ENCODE measurements at regions of chr7 and their contacts with region 1.

Region 1: GRCh38 chr7:116316833-116317612 is 106.7 kb downstream of the TES start:
- DNase-seq: peak; percentile 99
- H3K4me3 ChIP-seq: peak overlapping the region in 2 of 3 experiments; percentile 12 to 57
- H3K27ac ChIP-seq: peak overlapping the region; percentile 97
- H3K4me1 ChIP-seq: peaks cover 63% of the 10 kb centered on the region
- H3K27me3 ChIP-seq: no peaks in the 10 kb centered on the region
- CTCF ChIP-seq: no peak
- POLR2A ChIP-seq: peak; percentile 15

Region 2: DNA sequence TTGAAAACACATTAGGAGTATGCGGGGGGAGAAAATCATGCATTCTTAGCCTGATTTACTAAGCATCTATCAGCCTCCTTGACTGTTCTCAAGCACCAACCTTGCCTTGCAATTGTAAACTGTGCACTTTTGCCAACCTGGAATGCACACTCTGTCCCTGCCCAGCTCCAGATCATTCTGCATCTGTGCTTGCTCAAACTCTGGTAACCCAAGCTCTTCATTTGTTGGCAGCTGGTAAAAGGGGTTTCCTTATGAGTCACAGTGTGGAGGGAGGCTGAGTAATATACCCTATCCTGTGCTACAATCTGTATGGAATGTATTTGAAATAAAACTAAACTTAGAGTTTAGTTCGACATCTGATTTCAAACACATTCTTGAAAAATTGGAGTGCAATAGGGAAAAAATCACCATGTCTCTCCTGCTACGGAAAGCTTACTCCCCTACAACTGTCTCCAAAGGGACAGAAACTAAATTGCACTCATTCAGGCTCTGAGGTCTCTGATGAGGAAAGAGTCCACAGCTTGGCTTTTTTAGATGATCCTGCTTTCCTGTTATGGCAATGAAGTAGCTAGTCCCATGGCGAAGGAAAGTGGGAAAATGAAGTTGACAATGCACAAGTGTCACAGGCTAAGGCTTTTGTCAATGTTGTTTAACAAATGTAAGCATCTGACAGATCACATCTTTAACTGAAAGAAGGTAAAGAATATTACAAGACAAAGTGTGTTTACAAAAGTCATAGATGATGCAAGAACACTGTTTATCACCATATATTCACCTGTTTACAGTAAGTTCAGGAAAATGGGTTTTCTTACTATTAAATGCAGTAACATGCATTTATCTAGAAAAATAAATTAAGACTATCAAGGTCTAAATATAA is 44.8 kb before region 1 on chr7:
- CTCF ChIA-PET with region 1: interaction called, 3 read pairs
- POLR2A ChIA-PET with region 1: interaction called, 4 read pairs
- dilution Hi-C with region 1: no loop called
- intact Hi-C with region 1: loop called (anchors 2 kb)
- DNase-seq: peak; percentile 94
- H3K4me3 ChIP-seq: peak overlapping the region in 1 of 3 experiments; percentile 48
- H3K27ac ChIP-seq: peak overlapping the region; percentile 90
- H3K4me1 ChIP-seq: peaks cover 57% of the 10 kb centered on the region
- H3K27me3 ChIP-seq: no peaks in the 10 kb centered on the region
- CTCF ChIP-seq: no peak
- POLR2A ChIP-seq: no peak

Region 3: DNA sequence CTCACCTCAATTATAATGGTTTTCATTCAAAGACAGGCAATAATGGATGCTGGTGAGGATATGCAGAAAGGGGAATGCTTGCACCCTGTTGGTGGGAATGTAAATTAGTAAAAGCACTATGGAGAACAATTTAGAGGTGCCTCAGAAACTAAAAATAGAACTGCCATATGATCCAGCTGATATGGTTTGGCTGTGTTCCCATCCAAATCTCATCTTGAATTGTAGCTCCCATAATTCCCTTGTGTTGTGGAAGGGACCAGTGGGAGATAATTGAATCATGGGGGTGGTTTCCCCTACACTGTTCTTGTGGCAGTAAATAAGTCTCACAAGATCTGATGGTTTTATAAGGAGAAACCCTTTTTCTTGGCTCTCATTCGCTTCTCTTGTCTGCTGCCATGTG is 19.0 kb before region 1 on chr7:
- CTCF ChIA-PET with region 1: interaction called, 5 read pairs
- POLR2A ChIA-PET with region 1: no interaction called
- dilution Hi-C with region 1: no loop called
- intact Hi-C with region 1: loop called (anchors 2 kb)
- DNase-seq: no peak
- H3K4me3 ChIP-seq: no peak overlapping the region
- H3K27ac ChIP-seq: no peak overlapping the region
- H3K4me1 ChIP-seq: peaks cover 4% of the 10 kb centered on the region
- H3K27me3 ChIP-seq: no peaks in the 10 kb centered on the region
- CTCF ChIP-seq: no peak
- POLR2A ChIP-seq: no peak

Region 4: GRCh38 chr7:116327752-116328151 is 10.7 kb after region 1 on chr7:
- CTCF ChIA-PET with region 1: interaction called, 3 read pairs
- POLR2A ChIA-PET with region 1: no interaction called
- dilution Hi-C with region 1: no loop called
- intact Hi-C with region 1: loop called (anchors 1 kb)
- DNase-seq: peak; percentile 97
- H3K4me3 ChIP-seq: peak overlapping the region; percentile 43 to 99 (median 98)
- H3K27ac ChIP-seq: peak overlapping the region; percentile 97
- H3K4me1 ChIP-seq: peaks cover 48% of the 10 kb centered on the region
- H3K27me3 ChIP-seq: no peaks in the 10 kb centered on the region
- CTCF ChIP-seq: no peak
- POLR2A ChIP-seq: peak; percentile 97

Region 5: DNA sequence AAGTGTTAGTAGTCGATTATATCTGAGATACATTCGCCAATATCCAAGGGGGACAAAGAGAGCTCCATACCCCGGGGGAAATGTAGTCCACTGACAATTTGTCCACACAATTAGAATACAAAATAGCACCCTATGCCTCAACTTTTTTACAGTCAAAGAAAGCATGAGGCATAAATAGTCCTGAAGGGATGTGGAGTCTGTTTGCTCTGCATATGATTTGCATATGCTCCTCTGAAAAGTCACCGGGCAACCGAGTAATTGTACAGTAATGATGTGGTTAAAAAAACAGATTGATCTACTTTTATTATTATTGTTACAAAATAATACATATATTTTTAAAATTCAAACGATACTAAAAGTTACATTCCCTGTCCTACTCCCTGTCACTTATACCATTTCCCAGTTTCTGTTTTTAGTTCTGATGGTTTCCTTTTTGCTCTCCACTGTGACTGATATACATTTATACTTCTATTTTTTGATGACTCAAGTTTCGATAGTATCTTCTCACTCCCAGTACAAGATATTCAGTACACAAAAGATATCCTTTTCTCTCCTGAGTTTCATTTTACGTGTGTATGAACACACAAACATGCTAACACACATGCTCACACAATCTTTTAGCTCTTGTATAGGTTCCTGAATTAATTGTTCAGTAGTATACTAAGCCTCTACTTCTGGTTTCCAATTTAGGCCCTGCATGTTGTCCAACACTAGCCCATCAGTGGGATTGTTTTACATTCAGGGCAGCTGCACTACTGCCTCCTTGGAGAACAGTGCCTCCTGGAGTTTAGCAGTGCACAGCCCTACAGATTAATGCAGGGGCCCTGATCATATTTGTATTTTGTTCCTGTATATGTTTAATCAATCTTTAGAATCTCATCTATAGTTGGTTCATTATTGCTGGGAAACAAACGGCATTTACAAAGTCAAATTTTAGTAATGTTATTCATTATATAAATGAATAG is 24.2 kb after region 1 on chr7:
- CTCF ChIA-PET with region 1: interaction called, 5 read pairs
- POLR2A ChIA-PET with region 1: no interaction called
- dilution Hi-C with region 1: no loop called
- intact Hi-C with region 1: loop called (anchors 1 kb)
- DNase-seq: peak; percentile 72
- H3K4me3 ChIP-seq: peak overlapping the region in 1 of 3 experiments; percentile 31
- H3K27ac ChIP-seq: peak overlapping the region; percentile 87
- H3K4me1 ChIP-seq: peaks cover 49% of the 10 kb centered on the region
- H3K27me3 ChIP-seq: no peaks in the 10 kb centered on the region
- CTCF ChIP-seq: peak; percentile 45 to 48
- POLR2A ChIP-seq: no peak

Region 6: GRCh38 chr7:116809636-116810266 is 492.7 kb after region 1 on chr7:
- CTCF ChIA-PET with region 1: no interaction called
- POLR2A ChIA-PET with region 1: no interaction called
- dilution Hi-C with region 1: no loop called
- intact Hi-C with region 1: loop called (anchors 10 kb)
- DNase-seq: peak; percentile 86
- H3K4me3 ChIP-seq: no peak overlapping the region
- H3K27ac ChIP-seq: no peak overlapping the region
- H3K4me1 ChIP-seq: peaks cover 19% of the 10 kb centered on the region
- H3K27me3 ChIP-seq: no peaks in the 10 kb centered on the region
- CTCF ChIP-seq: peak; percentile 25 to 43
- POLR2A ChIP-seq: no peak

Measured in endothelial cell of umbilical vein (primary cell).